ENCODE measurements at regions of chr3 and their contacts with region 1.

Region 1: DNA sequence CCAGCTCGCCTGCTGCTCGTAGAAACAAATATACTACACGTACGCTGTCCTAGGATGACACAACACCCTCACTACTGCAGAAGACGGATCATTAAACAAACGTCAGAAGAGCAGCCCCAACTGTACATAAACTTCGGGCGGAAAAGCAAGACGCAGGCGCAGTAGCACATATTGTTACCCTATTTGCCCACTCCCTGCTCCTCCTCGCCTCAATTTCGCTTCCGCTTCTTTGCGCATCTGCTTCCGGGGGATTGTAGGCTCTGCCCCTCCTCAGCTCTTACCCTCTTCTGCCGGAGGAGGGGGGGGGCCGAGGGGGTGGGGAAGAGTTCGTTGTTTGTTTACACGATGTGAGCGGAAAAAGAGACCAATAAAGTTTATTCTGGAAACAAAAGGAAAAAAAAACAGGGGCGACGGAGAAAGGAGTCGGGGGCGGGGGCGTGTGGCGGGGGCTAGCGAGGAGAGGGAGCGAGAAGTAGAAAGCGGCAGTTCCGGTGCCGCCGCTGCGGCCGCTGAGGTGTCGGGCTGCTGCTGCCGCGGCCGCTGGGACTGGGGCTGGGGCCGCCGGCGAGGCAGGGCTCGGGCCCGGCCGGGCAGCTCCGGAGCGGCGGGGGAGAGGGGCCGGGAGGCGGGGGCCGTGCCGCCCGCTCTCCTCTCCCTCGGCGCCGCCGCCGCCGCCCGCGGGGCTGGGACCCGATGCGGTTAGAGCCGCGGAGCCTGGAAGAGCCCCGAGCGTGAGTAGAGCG is at the start of gene PIK3CA:
- DNase-seq: peak; percentile 96
- H3K4me3 ChIP-seq: peak within 1 kb of the TSS; percentile 57 to 99 (median 97)
- H3K27ac ChIP-seq: peak within 1 kb of the TSS; percentile 97 to 100 (median 100)
- H3K4me1 ChIP-seq: peaks cover 0 to 33% (median 12%) of the 10 kb centered on the region in 4 donors
- H3K27me3 ChIP-seq: peaks cover 18% of the 10 kb centered on the region
- CTCF ChIP-seq: no peak
- EP300 ChIP-seq: no peak
- POLR2A ChIP-seq: peak; percentile 82
- total RNA-seq, gene PIK3CA: 11.6 to 24.3 (median 18.1) TPM

Region 2: GRCh38 chr3:179309225-179310078 is 161.4 kb after region 1 on chr3:
- in situ Hi-C with region 1: loop called in 1 of 4 experiments (anchors 10 kb)
- intact Hi-C with region 1: no loop called
- DNase-seq: no peak
- H3K4me3 ChIP-seq: no peak overlapping the region
- H3K27ac ChIP-seq: no peak overlapping the region
- H3K4me1 ChIP-seq: no peaks in the 10 kb centered on the region
- H3K27me3 ChIP-seq: no peaks in the 10 kb centered on the region
- CTCF ChIP-seq: no peak
- EP300 ChIP-seq: no peak
- POLR2A ChIP-seq: no peak

Region 3: GRCh38 chr3:179322286-179323196 is 174.5 kb after region 1 on chr3 and contains the start of gene ZNF639:
- in situ Hi-C with region 1: loop called in 1 of 4 experiments (anchors 10 kb)
- intact Hi-C with region 1: loop called (anchors 5 kb)
- DNase-seq: peak; percentile 83
- H3K4me3 ChIP-seq: peak within 1 kb of the TSS; percentile 77 to 90 (median 90)
- H3K27ac ChIP-seq: peak within 1 kb of the TSS; percentile 92 to 98 (median 97)
- H3K4me1 ChIP-seq: peaks cover 13 to 33% (median 22%) of the 10 kb centered on the region in 4 donors
- H3K27me3 ChIP-seq: no peaks in the 10 kb centered on the region
- CTCF ChIP-seq: peak; percentile 58 to 90 (median 78)
- EP300 ChIP-seq: no peak
- POLR2A ChIP-seq: no peak
- total RNA-seq, gene ZNF639: 9.0 to 42.1 (median 21.9) TPM

Measured in transverse colon (tissue), 4 donors.